ENCODE measurements at regions of chr7 and their contacts with region 1.

Region 1: GRCh38 chr7:116525913-116526861 is 1.4 kb downstream of the CAV1 start:
- DNase-seq: peak; percentile 65
- H3K4me3 Mint-ChIP-seq: peak overlapping the region; percentile 85
- H3K27ac Mint-ChIP-seq: no peak overlapping the region
- H3K4me1 Mint-ChIP-seq: peaks cover 19% of the 10 kb centered on the region
- H3K27me3 Mint-ChIP-seq: peaks cover 62% of the 10 kb centered on the region

Region 2: GRCh38 chr7:114874170-114874569 is 1652.0 kb before region 1 on chr7:
- CTCF ChIA-PET with region 1: no interaction called
- intact Hi-C with region 1: no loop called
- DNase-seq: no peak
- H3K4me3 Mint-ChIP-seq: no peak overlapping the region
- H3K27ac Mint-ChIP-seq: no peak overlapping the region
- H3K4me1 Mint-ChIP-seq: no peaks in the 10 kb centered on the region
- H3K27me3 Mint-ChIP-seq: no peaks in the 10 kb centered on the region

Region 3: GRCh38 chr7:116417593-116418341 is 108.4 kb before region 1 on chr7:
- CTCF ChIA-PET with region 1: no interaction called
- intact Hi-C with region 1: no loop called
- DNase-seq: no peak
- H3K4me3 Mint-ChIP-seq: no peak overlapping the region
- H3K27ac Mint-ChIP-seq: no peak overlapping the region
- H3K4me1 Mint-ChIP-seq: no peaks in the 10 kb centered on the region
- H3K27me3 Mint-ChIP-seq: peaks cover 5% of the 10 kb centered on the region

Region 4: GRCh38 chr7:116499168-116500077 is 26.8 kb before region 1 on chr7 and contains the start of gene CAV2:
- CTCF ChIA-PET with region 1: interaction called, 3 read pairs
- intact Hi-C with region 1: loop called (anchors 1 kb)
- DNase-seq: peak; percentile 9
- H3K4me3 Mint-ChIP-seq: peak within 1 kb of the TSS; percentile 55
- H3K27ac Mint-ChIP-seq: no peak within 1 kb of the TSS
- H3K4me1 Mint-ChIP-seq: peaks cover 10% of the 10 kb centered on the region
- H3K27me3 Mint-ChIP-seq: peaks cover 42% of the 10 kb centered on the region
- total RNA-seq, gene CAV2: not detected

Region 5: DNA sequence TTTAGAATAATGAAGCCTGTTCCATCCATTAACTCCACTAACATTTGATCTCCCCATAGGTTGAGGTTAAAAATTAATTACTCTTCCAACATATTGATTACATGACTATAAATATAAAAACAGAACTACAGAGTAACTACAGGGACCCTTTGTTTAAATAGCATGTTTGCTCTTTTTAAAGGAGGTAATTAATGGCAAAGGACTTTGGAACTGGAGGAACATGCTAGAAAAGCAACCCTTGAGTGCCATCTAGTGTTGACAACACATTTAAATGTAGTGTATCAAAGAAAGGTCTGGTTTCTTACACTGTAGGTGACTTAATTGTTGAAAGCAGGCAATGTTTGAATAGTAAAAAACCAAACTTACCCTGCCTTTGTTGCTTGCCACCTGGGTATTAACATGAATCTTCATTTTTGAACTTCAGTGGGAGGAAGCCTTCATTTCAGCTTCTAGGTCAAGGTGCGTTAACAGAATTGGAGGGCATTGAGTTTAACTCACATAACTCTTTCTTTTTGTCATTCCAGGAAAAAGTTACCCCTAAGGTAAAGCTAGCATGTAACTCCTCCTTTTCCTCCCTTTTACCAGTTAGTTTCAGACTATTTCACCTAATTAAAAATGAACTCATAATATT is 283.6 kb after region 1 on chr7:
- CTCF ChIA-PET with region 1: no interaction called
- intact Hi-C with region 1: loop called (anchors 5 kb)
- DNase-seq: peak; percentile 21
- H3K4me3 Mint-ChIP-seq: no peak overlapping the region
- H3K27ac Mint-ChIP-seq: no peak overlapping the region
- H3K4me1 Mint-ChIP-seq: no peaks in the 10 kb centered on the region
- H3K27me3 Mint-ChIP-seq: no peaks in the 10 kb centered on the region